Heart left ventricle (tissue), 16 donors: ENCODE measurements at regions of chr10 and their contacts with region 1.

Region 1: GRCh38 chr10:132665946-132666704 is 119.8 kb downstream of the NKX6-2 start:
- DNase-seq: no peak
- ATAC-seq: peak in 3 of 4 donors; percentile 42 to 67 (median 55)
- H3K4me3 ChIP-seq: no peak overlapping the region
- H3K27ac ChIP-seq: peak overlapping the region in 1 of 12 donors; percentile 6
- H3K4me1 ChIP-seq: peaks cover 0 to 9% (median 0%) of the 10 kb centered on the region in 12 donors
- H3K27me3 ChIP-seq: no peaks in the 10 kb centered on the region
- CTCF ChIP-seq: no peak
- POLR2A ChIP-seq: no peak

Region 2: GRCh38 chr10:133139551-133140065 is 473.5 kb after region 1 on chr10:
- intact Hi-C with region 1: loop called in 1 of 10 experiments (anchors 10 kb)
- DNase-seq: peak in 3 of 5 donors; percentile 12 to 19 (median 13)
- ATAC-seq: no peak
- H3K4me3 ChIP-seq: no peak overlapping the region
- H3K27ac ChIP-seq: no peak overlapping the region
- H3K4me1 ChIP-seq: peaks cover 0 to 6% (median 0%) of the 10 kb centered on the region in 12 donors
- H3K27me3 ChIP-seq: peaks cover 7 to 46% (median 27%) of the 10 kb centered on the region in 9 donors
- CTCF ChIP-seq: no peak
- POLR2A ChIP-seq: no peak